AG04450 (cell line): ENCODE measurements at regions of chr18 and their contacts with region 1.

Region 1: GRCh38 chr18:22320155-22320554 is 97.6 kb downstream of the CTAGE1 start:
- DNase-seq: no peak
- H3K4me3 ChIP-seq: no peak overlapping the region
- H3K27ac ChIP-seq: no peak overlapping the region
- H3K27me3 ChIP-seq: peaks cover 2% of the 10 kb centered on the region
- CTCF ChIP-seq: no peak

Region 2: DNA sequence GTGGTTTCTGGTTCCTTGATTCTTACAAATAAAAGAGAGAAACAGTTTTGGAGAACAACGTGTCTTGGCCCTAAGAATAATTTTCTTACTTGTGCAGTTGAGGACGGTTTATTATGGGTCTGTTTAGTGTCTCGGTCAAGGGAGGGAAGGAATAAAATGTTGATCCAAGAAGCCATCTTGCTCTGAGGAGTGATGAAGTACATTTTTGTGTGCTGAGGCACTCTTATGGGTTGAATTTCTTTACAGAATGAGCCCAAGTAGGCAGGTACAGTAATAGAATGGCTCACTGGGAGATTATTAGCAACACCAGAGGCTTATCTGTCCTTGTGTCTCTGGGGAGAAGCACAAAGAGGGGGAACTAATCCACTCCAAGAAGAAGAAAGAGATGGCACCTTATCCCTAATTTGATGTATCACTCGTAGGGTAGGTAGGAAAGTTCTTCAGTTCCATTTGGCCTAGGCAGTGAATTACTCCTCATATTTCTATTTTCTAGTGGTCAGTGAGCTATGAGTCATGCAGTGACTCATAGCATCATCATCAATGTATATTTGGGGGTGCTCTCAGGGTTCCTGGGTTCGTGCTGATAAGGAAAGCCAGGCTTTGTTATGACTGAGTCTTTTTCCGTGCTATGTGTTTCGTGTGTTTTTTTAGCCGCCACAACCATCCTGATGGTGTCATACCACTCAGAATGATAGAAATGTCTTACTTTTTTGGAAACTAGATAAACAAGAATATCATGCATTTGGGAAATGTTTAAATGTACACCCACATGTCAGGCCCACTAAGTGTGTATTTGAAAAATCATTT is 347.7 kb after region 1 on chr18:
- CTCF ChIA-PET with region 1: interaction called, 13 read pairs
- POLR2A ChIA-PET with region 1: no interaction called
- DNase-seq: peak; percentile 83
- H3K4me3 ChIP-seq: no peak overlapping the region
- H3K27ac ChIP-seq: peak overlapping the region; percentile 81
- H3K27me3 ChIP-seq: no peaks in the 10 kb centered on the region
- CTCF ChIP-seq: no peak